HEK293 (cell line): ENCODE measurements at regions of chr1 and their contacts with region 1.

Region 1: DNA sequence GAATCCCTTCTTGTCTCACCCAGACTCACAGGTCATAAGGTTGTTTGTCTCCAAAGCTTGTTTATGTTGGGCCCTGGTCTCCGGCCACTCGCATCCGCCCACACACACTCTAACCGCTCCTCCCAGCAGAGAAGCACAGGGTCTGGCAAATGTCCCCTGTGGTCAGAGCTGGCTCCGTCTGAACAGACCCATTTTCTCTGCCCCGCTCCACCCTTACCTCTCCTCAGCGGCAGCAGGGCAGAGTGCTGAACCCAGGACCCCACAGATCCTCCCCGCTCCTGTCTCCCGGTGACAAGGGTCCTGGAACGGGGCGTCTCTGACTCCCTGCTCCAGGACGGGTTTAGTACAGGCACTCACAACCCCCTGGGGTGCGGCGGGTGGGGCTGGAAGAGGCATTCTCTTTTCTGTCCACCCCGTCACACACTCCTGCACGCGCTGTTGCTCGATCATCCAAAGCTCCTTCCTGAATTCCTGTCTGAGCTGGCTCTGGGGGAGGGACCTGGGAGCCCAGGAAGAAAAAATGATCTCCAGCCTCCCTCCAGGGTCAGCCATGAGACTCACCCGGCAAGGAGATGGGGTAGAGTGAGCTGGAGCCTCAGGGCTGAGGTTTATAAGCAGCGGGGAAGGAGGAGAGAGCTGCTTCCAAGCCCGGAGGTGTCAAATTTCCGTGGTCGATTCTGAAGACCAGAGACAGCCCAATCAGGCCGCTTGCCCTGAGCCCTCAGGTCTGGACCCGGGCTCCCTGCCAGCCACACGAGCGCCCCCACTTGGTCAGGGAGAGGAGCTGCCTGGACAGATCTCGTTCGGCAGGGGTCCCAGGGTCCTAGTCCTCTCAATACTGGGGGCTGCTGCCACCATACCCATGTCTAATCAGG is at the start of gene S100A13:
- H3K4me3 ChIP-seq: peak within 1 kb of the TSS; percentile 55
- H3K27ac ChIP-seq: peak within 1 kb of the TSS; percentile 61
- H3K4me1 ChIP-seq: 0 out of 2 replicates have a peak, but pooled peaks cover 3% of the 10 kb centered on the region
- CTCF ChIP-seq: peak; percentile 89

Region 2: DNA sequence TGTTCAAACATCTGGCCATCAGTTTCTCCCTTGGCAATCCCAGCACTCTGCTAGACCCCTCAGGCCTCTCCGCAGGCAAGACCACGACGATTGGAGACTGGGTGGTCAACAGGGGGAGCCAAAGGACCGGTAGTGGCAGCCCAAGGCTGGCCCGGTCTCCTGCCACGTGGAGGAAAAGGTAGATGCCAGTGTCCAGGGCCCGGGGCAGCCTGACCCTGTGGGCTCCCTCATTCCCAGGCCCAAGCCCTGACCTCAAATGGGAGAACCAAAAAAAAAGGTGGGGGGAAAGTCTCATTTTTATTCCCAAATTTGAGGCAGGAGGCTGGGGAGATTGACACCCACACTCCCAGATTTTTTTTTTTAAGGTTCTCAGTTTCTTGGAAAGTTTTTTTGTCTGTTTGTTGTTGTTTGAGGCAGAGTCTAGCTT is 116.2 kb before region 1 on chr1:
- CTCF ChIA-PET with region 1: interaction called, 54 read pairs
- POLR2A ChIA-PET with region 1: interaction called, 8 read pairs
- H3K4me3 ChIP-seq: no peak overlapping the region
- H3K27ac ChIP-seq: no peak overlapping the region
- H3K4me1 ChIP-seq: no peaks in the 10 kb centered on the region
- CTCF ChIP-seq: peak; percentile 86

Region 3: DNA sequence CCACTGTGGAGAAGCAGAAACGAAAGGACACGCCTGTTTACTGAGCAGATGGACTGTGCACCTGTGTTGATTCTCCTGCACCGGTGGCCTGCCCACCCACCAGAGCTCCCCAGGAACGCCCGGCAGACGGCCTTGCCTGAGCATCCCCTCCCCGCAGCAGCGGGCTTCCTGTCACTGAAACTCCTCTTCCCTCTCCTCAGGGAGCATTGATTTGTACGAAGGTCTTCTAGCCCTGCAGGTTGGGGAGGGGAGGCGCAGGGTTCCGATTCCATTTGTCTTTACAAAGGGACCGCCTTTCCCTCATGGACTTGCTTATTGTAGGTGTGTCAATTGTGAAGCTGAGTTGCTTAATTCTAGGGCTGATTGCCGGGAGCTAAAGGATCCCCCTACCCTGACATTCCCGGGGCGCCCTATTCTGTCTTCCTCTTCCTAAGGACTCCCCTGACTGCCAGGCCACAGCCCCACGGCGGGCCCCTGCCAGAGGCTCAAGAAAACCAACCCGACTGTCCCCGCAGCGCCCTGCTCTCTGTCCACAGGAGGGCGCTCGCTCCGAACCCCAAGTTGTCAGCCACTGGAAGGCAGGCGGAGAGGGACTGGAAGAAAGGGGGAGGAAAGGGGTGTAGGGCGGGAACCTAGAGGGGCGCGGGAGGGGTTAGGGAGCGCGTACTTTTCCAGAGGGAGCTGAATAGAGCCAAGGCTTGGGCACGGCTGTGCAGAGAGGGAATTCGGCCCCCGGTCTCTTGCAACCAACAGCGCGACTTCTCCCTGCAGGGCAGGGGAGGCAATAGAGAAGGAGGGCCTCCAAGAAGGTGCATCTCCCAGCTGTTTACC is 94.2 kb before region 1 on chr1:
- CTCF ChIA-PET with region 1: interaction called, 13 read pairs
- POLR2A ChIA-PET with region 1: interaction called, 7 read pairs
- H3K4me3 ChIP-seq: no peak overlapping the region
- H3K27ac ChIP-seq: no peak overlapping the region
- H3K4me1 ChIP-seq: no peaks in the 10 kb centered on the region
- CTCF ChIP-seq: no peak

Region 4: GRCh38 chr1:153566440-153567379 is 60.4 kb before region 1 on chr1:
- CTCF ChIA-PET with region 1: interaction called, 37 read pairs
- POLR2A ChIA-PET with region 1: interaction called, 16 read pairs
- H3K4me3 ChIP-seq: no peak overlapping the region
- H3K27ac ChIP-seq: peak overlapping the region; percentile 77
- H3K4me1 ChIP-seq: peaks cover 7% of the 10 kb centered on the region
- CTCF ChIP-seq: no peak

Region 5: DNA sequence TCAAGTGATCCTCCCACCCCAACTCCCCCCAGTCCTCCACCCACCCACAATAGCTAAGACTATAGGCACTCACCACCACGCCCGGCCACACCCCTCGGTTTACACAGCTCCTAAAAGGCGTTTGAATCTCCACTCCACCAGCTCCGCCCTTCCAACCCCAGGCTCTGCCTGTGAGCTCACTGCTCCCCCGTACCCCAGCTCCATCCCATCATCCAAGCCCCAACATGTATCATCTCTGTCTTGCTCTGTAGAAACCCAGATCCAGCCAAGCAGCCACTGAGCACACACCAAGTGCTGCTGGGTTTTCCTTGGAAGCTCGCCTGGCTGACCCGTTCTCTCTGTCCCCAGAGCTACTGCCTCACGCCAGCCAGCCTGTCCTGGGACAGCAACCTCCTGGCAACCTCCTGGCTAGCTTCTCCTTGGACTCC is 49.5 kb before region 1 on chr1:
- CTCF ChIA-PET with region 1: interaction called, 37 read pairs
- POLR2A ChIA-PET with region 1: interaction called, 16 read pairs
- H3K4me3 ChIP-seq: no peak overlapping the region
- H3K27ac ChIP-seq: no peak overlapping the region
- H3K4me1 ChIP-seq: no peaks in the 10 kb centered on the region
- CTCF ChIP-seq: no peak

Region 6: GRCh38 chr1:153639280-153639679 is 12.1 kb after region 1 on chr1:
- CTCF ChIA-PET with region 1: interaction called, 11 read pairs
- POLR2A ChIA-PET with region 1: interaction called, 12 read pairs
- H3K4me3 ChIP-seq: no peak overlapping the region
- H3K27ac ChIP-seq: no peak overlapping the region
- H3K4me1 ChIP-seq: no peaks in the 10 kb centered on the region
- CTCF ChIP-seq: no peak

Region 7: DNA sequence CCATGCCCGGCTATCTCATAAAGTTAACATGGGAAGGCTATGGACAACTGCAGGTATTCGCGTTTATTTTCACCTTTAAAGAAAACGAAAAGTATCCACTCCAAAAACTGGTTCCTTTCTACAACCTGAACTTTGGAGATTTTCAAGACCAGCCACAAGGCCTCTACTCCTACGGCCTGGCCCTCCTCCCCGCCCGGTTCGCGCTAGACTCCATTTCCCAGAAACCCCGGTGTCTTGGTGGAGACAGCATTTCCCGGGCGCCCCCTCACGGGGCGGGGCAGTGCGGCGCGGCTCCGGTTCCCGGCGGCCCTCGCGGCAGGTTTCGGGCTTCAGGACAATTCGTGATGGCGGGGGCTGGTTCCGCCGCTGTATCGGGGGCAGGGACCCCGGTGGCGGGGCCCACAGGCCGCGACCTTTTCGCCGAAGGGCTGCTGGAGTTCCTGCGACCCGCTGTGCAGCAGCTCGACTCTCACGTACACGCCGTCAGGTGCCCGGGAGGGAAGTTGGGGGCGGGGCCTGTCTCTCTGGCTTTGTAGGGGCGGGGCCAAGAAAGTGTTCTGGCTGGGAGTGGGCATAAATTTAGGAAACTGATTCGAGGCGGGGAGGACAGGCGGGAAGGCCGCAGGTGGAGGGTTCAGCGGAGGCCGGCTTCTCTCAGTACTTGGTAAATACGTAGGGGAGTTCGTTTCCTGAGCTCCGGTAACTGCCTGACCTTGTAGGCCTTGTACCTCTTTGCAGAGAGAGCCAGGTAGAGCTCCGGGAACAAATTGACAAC is 31.4 kb after region 1 on chr1 and contains the start of gene SNAPIN:
- CTCF ChIA-PET with region 1: interaction called, 3 read pairs
- POLR2A ChIA-PET with region 1: interaction called, 18 read pairs
- H3K4me3 ChIP-seq: peak within 1 kb of the TSS; percentile 87
- H3K27ac ChIP-seq: peak within 1 kb of the TSS; percentile 78
- H3K4me1 ChIP-seq: 0 out of 2 replicates have a peak, but pooled peaks cover 2% of the 10 kb centered on the region
- CTCF ChIP-seq: peak; percentile 76

Region 8: DNA sequence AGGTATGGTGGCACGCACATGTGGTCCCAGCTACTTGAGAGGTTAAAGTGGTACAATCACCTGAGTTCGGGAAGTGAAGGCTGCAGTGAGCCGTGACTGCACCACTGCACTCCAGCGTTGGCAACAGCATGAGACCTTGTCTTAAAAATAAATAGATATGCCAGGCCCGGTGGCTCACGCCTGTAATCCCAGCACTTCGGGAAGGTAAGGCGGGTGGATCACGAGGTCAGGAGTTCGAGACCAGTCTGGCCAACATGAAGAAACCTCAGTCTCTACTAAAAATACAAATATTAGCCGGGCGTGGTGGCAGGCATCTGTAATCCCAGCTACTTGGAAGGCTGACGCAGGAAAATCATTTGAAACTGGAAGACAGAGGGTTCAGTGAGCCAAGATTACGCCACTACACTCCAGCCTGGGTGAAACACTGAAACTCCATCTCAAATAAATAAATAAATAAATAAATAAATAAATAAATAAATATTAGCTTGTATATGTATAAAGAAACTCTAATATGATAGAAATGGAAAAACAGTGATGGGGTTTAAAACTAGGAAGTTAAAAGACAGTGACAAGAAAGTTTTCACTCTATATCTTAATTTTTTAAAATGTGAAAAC is 276.8 kb after region 1 on chr1:
- CTCF ChIA-PET with region 1: no interaction called
- POLR2A ChIA-PET with region 1: no interaction called
- H3K4me3 ChIP-seq: no peak overlapping the region
- H3K27ac ChIP-seq: no peak overlapping the region
- H3K4me1 ChIP-seq: peaks cover 2% of the 10 kb centered on the region; the same call in 1 of the 2 replicates
- CTCF ChIP-seq: no peak